ENCODE measurements at regions of chr20 and their contacts with region 1.

Region 1: DNA sequence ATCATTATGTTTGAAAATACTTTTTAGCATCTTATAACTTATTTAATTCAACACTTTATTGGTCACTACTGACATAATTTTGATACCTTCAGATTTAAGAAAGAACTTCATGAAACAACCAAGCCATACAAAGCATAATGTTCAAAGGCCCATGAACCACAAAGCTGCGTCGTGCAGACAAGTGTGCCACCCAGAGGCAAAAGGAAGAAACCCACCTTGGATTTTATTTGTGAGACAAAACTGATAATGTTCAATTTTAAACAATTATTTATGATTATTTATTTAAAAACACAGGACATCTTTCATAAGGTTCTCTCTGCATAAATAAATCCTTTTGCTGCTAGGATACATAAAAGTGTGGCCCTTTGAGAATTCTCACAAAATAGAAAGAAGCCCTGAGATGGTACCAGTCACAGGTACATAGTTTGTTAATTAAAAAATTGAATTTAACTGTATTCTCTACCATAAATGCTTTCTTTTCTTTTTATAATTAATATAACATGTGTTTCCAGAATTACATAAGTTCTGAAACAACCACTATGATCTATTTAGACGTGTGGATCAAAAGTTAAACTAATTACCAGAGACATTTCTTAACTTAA is 143.7 kb downstream of the RALGAPA2 start:
- DNase-seq: peak in 1 of 2 experiments; percentile 43
- H3K4me3 ChIP-seq: no peak overlapping the region
- H3K4me3 Mint-ChIP-seq: no peak overlapping the region
- H3K27ac Mint-ChIP-seq: no peak overlapping the region
- H3K4me1 ChIP-seq: peaks cover 18% of the 10 kb centered on the region
- H3K4me1 Mint-ChIP-seq: no peaks in the 10 kb centered on the region
- H3K27me3 ChIP-seq: no peaks in the 10 kb centered on the region
- H3K27me3 Mint-ChIP-seq: no peaks in the 10 kb centered on the region
- CTCF ChIP-seq: peak; percentile 79 to 80

Region 2: DNA sequence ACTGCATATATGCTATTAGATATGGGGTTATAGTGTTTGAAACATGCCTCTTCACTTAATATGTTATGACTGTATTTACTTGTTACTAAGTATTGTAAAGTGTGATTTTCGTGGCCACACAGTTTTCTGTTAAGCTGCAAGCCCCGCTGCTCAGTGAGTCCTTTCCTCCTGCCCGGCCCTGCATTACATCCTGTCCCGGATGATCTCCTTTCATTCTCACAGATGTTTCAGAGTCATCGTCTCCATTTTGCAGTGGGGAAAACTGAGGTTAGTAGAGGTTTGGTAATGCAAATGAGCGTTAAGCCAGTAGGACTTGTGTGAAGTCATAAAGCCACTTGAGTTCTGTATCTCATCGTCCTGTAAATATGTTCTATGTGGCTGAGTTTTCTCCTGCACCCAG is 360.8 kb before region 1 on chr20:
- CTCF ChIA-PET with region 1: no interaction called
- POLR2A ChIA-PET with region 1: no interaction called
- intact Hi-C with region 1: no loop called
- DNase-seq: no peak
- H3K4me3 ChIP-seq: no peak overlapping the region
- H3K4me3 Mint-ChIP-seq: no peak overlapping the region
- H3K27ac Mint-ChIP-seq: no peak overlapping the region
- H3K4me1 ChIP-seq: no peaks in the 10 kb centered on the region
- H3K4me1 Mint-ChIP-seq: no peaks in the 10 kb centered on the region
- H3K27me3 ChIP-seq: 0 out of 2 replicates have a peak, but pooled peaks cover 1% of the 10 kb centered on the region
- H3K27me3 Mint-ChIP-seq: no peaks in the 10 kb centered on the region
- CTCF ChIP-seq: no peak

Region 3: GRCh38 chr20:20353576-20353975 is 215.1 kb before region 1 on chr20:
- CTCF ChIA-PET with region 1: no interaction called
- POLR2A ChIA-PET with region 1: no interaction called
- intact Hi-C with region 1: no loop called
- DNase-seq: no peak
- H3K4me3 ChIP-seq: no peak overlapping the region
- H3K4me3 Mint-ChIP-seq: no peak overlapping the region
- H3K27ac Mint-ChIP-seq: no peak overlapping the region
- H3K4me1 ChIP-seq: no peaks in the 10 kb centered on the region
- H3K4me1 Mint-ChIP-seq: no peaks in the 10 kb centered on the region
- H3K27me3 ChIP-seq: no peaks in the 10 kb centered on the region; the same call in 1 of the 2 replicates
- H3K27me3 Mint-ChIP-seq: peaks cover 3% of the 10 kb centered on the region
- CTCF ChIP-seq: no peak

Region 4: DNA sequence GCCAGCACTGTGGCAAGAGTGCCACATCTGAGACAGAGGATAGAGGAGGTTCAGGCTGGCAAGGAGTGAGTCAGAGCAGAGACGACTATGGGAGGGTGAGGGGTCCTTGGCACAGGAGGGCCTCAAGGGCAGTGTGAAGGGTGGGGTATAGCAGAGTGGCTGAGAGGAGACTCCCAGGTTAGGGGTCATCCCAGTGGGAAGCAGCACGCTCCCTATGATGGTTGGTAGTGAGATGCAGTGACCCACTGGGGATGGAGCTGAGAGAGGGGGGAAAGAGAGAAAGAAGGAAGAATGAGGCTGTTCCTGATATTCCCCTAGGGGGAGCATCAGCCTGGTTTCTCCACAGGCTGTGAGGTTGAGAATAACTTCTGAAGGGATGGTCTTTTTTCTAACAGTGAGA is 103.5 kb before region 1 on chr20:
- CTCF ChIA-PET with region 1: no interaction called
- POLR2A ChIA-PET with region 1: no interaction called
- intact Hi-C with region 1: loop called (anchors 1 kb)
- DNase-seq: peak in 1 of 2 experiments; percentile 40
- H3K4me3 ChIP-seq: no peak overlapping the region
- H3K4me3 Mint-ChIP-seq: no peak overlapping the region
- H3K27ac Mint-ChIP-seq: no peak overlapping the region
- H3K4me1 ChIP-seq: no peaks in the 10 kb centered on the region
- H3K4me1 Mint-ChIP-seq: no peaks in the 10 kb centered on the region
- H3K27me3 ChIP-seq: no peaks in the 10 kb centered on the region
- H3K27me3 Mint-ChIP-seq: no peaks in the 10 kb centered on the region
- CTCF ChIP-seq: peak in 1 of 2 experiments; percentile 62

Region 5: GRCh38 chr20:20518263-20518662 is 50.4 kb before region 1 on chr20:
- CTCF ChIA-PET with region 1: no interaction called
- POLR2A ChIA-PET with region 1: no interaction called
- intact Hi-C with region 1: loop called (anchors 5 kb)
- DNase-seq: no peak
- H3K4me3 ChIP-seq: no peak overlapping the region
- H3K4me3 Mint-ChIP-seq: no peak overlapping the region
- H3K27ac Mint-ChIP-seq: no peak overlapping the region
- H3K4me1 ChIP-seq: no peaks in the 10 kb centered on the region
- H3K4me1 Mint-ChIP-seq: peaks cover 10% of the 10 kb centered on the region
- H3K27me3 ChIP-seq: no peaks in the 10 kb centered on the region
- H3K27me3 Mint-ChIP-seq: no peaks in the 10 kb centered on the region
- CTCF ChIP-seq: no peak

Region 6: DNA sequence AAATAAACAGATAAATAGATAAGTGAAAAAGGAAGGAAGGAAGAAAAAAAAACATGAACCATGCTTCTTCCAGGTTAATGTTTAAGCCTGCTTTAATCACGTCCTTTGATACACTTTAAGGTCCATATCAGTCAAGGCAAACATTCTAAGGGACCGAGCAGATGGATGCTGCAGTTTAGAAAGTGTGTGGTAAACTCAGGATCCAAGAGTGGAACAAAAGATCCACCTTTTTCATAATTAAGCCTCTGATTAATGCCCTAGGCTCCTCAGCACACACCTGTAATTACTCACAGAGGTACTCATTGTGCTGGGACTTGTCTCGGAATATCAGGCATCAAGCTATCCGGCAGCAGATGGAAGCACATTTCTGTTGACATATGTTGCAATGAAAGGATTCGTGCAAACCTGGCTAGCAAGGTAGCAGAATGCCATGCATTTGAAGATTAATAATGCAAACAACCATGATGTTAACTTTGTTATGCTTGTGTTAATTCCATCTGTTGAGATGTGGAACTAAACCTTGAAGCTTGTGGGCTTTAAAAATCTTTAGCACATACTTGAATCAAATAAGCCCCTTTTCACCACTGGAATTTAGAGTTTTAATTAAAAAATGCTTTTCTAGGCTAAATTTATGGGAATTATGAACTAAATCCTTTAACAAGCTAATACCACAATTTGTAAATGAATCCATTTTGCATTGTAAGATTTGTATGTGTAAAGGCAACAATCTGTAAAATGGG is 20.0 kb before region 1 on chr20:
- CTCF ChIA-PET with region 1: no interaction called
- POLR2A ChIA-PET with region 1: no interaction called
- intact Hi-C with region 1: loop called (anchors 1 kb)
- DNase-seq: peak; percentile 85 to 88
- H3K4me3 ChIP-seq: no peak overlapping the region; the same call in 1 of the 2 replicates
- H3K4me3 Mint-ChIP-seq: peak overlapping the region; percentile 57
- H3K27ac Mint-ChIP-seq: peak overlapping the region; percentile 80
- H3K4me1 ChIP-seq: peaks cover 57% of the 10 kb centered on the region
- H3K4me1 Mint-ChIP-seq: peaks cover 34% of the 10 kb centered on the region
- H3K27me3 ChIP-seq: no peaks in the 10 kb centered on the region
- H3K27me3 Mint-ChIP-seq: no peaks in the 10 kb centered on the region
- CTCF ChIP-seq: no peak

Measured in Caco-2 (cell line).